Cardiac septum (tissue), 1 donor: ENCODE measurements at regions of chr3 and their contacts with region 1.

Region 1: DNA sequence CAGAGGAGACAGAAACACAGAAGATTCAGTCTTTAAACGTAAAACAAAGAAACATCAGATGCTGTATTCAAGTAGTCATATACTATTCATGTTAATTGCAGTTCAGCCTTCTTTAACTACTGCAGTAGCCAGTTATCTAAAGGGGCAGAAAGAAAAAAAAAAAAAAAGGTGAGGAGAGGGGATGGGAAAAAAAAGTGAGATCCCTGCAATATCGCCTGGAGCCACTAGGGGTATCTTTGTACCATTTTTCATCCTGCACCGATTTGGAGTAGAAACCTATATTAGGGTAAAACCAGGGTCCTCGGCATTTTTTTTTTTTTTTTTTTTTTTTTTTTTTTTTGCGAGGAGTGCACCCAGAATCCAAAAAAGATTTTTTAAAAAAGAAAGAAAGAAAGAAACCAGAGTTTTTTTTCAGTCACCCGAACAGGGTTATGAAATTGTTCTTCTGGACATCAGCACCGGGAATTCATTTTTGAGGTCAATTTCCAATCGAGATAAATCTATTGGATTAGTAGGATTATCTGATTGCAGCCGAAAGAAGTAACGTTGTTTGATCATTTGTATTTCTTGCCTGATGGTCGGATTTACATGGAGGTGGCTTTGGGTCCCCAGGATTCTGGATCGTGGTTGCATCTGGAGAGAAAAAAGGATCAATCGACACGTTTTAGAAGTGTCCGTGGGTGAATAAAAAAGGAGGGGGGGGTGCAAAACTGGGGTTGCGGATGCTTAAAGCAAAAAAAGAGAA is 186.7 kb downstream of the NLGN1 start:
- DNase-seq: no peak

Region 2: DNA sequence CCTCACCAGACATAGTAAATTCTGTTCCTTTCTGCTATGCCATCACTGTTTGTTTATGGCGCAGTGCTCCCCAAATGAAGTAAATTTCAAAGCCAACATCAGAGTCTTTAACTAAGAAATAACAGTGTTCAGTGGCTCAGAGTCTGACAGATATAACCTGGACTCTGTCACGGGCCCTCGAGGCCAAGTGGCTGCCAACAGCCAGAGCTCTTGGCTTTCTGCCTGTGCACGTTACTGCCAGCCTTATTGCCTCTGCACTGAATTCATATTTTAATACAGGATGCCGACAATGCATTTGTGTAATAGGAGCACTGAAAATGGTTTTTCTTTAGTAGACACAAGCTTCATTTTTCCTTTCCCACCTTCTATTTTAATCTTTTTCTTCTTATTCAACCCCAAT is 33.2 kb after region 1 on chr3:
- intact Hi-C with region 1: no loop called
- DNase-seq: peak; percentile 80

Region 3: GRCh38 chr3:173660645-173661615 is 76.7 kb after region 1 on chr3:
- intact Hi-C with region 1: loop called (anchors 1 kb)
- DNase-seq: no peak

Region 4: GRCh38 chr3:173902871-173903270 is 318.6 kb after region 1 on chr3:
- intact Hi-C with region 1: loop called (anchors 10 kb)
- DNase-seq: no peak